ENCODE measurements at regions of chr1 and their contacts with region 1.

Region 1: DNA sequence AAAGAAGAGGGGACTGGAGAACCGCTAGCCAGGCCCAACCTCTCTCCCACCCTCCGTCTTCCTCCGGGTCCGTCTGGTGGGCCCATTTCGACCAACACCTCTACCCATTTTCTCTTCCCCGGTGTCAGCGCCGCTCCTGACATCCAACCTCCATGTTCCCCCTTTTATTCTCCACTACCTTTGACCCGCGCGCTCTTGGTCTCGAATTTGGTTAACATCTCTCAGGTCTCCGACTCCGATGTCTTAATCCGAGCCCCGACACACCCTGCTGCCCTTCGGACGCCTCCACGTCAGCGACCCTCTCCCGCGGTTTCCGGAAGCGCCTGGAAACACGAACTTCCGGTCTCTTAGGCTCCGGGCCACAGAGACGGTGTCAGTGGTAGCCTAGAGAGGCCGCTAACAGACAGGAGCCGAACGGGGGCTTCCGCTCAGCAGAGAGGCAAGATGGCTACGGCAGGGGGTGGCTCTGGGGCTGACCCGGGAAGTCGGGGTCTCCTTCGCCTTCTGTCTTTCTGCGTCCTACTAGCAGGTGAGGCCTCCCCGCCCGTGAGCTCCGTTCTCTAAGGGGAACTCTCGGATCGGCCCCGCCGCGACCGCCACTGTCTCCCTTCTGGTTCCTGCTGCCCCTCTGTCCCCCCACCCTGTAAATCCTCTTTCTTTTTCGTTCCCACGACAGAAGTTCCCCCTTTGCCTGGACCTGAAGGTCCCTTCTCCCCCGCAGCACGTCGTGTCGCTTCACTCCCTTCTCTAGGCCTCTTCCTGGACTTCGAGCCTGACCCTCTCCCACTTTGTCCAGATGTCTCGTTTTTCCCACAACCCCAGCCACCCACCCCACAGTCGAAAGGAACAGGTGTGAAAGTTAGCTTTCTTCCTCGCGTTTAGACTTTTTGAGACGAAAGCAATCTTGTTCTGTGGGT is at the starts of genes COPA and NCSTN:
- DNase-seq: peak; percentile 89 to 97 (median 91)
- ATAC-seq: peak; percentile 97
- H3K4me3 ChIP-seq: peak within 1 kb of the TSS; percentile 74
- H3K27ac ChIP-seq: peak within 1 kb of the TSS; percentile 96
- H3K4me1 ChIP-seq: peaks cover 0 to 14% of the 10 kb centered on the region in 2 experiments; a peak in 2 of 5 replicates
- H3K27me3 ChIP-seq: no peaks in the 10 kb centered on the region
- CTCF ChIP-seq: peak in 1 of 3 experiments; percentile 4; a peak in 1 of 6 replicates
- EP300 ChIP-seq: peak; percentile 35; the same call in 1 of the 2 replicates
- POLR2A ChIP-seq: peak; percentile 95
- RAD21 ChIP-seq: no peak; a peak in 1 of 4 replicates
- polyA plus RNA-seq, gene COPA: 49.8 to 123 TPM
- polyA plus RNA-seq, gene NCSTN: 46.0 to 68.7 TPM

Region 2: DNA sequence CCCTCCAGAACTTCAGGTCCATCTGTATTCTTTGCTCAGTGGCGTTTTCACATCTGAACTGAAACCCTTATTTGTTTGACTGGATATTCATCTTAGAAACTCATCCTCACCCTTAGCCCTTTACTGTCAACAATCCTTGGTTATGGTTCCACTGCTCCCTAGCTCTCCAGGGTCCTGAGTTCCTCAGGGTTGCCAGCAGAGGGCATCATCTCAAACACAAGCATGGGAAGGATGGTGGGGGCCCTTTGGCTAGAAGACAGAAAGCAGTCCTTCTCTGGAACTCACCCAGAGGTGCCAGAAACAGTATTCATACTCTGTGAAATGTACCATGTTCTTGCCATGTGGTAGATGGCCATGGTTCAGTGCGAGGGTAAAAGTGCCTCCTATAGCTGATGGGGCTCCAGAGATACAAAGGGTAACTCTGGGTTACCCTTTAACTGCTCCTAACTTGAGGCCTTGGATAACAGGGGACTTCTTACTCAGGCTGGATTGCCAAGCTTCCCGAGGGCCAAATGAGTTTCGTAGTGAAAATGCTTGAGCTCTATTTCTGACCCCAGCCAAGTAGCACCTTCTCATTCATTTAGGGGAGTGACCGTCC is 11.3 kb after region 1 on chr1:
- CTCF ChIA-PET with region 1: no interaction called
- POLR2A ChIA-PET with region 1: interaction called, 14 read pairs
- in situ Hi-C with region 1: no loop called
- intact Hi-C with region 1: no loop called
- DNase-seq: peak; percentile 58 to 66 (median 60)
- ATAC-seq: peak; percentile 94
- H3K4me3 ChIP-seq: no peak overlapping the region
- H3K27ac ChIP-seq: no peak overlapping the region
- H3K4me1 ChIP-seq: no peaks in the 10 kb centered on the region
- H3K27me3 ChIP-seq: no peaks in the 10 kb centered on the region
- CTCF ChIP-seq: peak; percentile 66 to 71 (median 69)
- EP300 ChIP-seq: no peak
- POLR2A ChIP-seq: no peak
- RAD21 ChIP-seq: peak; percentile 53 to 78; a peak in 3 of 4 replicates

Region 3: DNA sequence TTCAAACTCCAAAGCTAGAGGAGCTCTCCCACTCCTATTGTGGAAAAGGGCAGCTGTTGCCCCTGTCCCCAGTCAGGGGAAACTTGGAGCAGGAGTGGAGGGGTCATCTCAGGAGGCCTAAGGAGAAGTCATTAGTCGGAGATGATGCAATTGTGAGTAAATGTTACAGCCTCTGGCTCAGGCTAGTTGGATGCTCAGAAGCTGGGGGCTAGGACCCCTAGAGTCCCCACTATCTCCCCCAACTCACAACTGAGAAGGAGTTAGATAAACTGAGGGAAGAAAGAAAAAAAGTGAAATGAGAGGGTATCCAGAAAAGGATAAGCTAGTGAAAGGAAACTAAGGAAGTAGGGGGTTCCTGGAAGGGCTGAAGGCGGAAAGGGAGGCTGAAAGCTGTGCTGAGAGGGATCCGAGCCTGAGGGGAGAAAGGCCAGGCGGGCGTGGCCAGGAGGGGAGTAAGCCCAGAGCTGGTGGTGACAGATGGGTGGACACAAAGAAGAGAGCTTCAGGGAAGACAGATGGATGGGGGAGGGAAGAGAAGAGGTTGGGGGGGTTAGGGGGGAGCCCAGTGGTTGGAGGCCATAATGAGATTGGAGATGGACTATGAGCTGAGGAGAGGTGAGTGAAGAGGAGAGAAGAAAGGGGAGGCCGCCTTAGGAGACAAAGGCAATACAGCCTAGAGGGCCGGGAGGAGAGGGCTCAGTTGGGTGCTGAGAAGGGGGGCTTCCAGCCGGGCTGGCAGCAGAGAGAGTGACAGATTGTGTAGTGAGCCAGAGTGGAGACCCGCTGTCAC is 19.2 kb after region 1 on chr1:
- CTCF ChIA-PET with region 1: no interaction called
- POLR2A ChIA-PET with region 1: interaction called, 21 read pairs
- in situ Hi-C with region 1: no loop called
- intact Hi-C with region 1: no loop called
- DNase-seq: peak; percentile 75 to 78 (median 78)
- ATAC-seq: peak; percentile 85
- H3K4me3 ChIP-seq: no peak overlapping the region
- H3K27ac ChIP-seq: peak overlapping the region; percentile 73
- H3K4me1 ChIP-seq: peaks cover 18 to 34% of the 10 kb centered on the region in 2 experiments
- H3K27me3 ChIP-seq: no peaks in the 10 kb centered on the region
- CTCF ChIP-seq: no peak
- EP300 ChIP-seq: peak; percentile 64
- POLR2A ChIP-seq: no peak
- RAD21 ChIP-seq: 0 out of 4 replicates have a peak, but pooled peaks of 1 of the 2 experiments have one; percentile 23

Region 4: DNA sequence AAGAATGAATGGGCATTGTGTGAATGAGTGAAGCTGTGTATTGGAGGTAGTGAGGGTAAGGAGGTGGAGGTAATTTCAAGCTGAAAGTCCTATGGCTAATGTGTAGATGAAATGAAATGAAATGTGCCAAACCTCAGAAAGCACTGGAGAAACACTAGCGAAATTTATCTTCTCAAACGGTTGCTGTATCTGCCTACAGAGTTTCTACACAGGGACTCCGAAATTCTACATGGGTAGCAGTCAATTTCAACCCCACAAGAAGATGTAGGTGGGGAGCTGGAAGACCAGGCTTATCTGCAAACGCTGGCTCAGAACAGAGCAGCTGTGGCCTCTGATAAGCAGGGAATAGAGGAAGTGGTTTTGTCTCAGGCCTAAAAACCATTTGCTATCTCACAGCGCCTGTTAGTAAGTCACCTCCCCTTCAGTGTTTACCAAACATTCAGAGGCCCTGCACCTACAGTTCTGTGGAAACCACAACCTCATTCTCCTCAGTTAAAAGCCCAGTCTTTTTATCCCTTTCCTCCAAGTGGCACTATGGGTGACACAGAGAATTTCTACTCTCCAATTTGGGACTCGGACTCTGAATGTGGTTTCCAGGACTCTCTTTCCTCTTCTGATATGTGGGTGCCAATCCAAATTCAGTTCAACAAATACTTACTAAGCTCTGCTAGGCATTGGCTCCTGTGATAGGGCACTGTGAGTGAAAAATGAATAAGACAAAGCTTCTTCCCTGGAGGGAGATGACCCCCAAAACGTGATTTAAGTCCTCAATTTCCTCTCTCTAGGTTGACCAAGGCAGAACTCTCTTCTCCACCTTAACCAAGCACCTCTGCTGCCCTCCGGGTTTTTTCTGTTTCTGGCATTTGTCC is 197.0 kb after region 1 on chr1:
- CTCF ChIA-PET with region 1: no interaction called
- POLR2A ChIA-PET with region 1: no interaction called
- in situ Hi-C with region 1: no loop called
- intact Hi-C with region 1: no loop called
- DNase-seq: peak; percentile 92 to 99 (median 94)
- ATAC-seq: peak; percentile 95
- H3K4me3 ChIP-seq: no peak overlapping the region; the same call in 1 of the 2 replicates
- H3K27ac ChIP-seq: peak overlapping the region; percentile 93
- H3K4me1 ChIP-seq: peaks cover 22 to 47% of the 10 kb centered on the region in 2 experiments
- H3K27me3 ChIP-seq: no peaks in the 10 kb centered on the region
- CTCF ChIP-seq: peak in 1 of 3 experiments; percentile 32; a peak in 2 of 6 replicates
- EP300 ChIP-seq: peak; percentile 100
- POLR2A ChIP-seq: peak; percentile 72
- RAD21 ChIP-seq: peak; percentile 45 to 61

Region 5: DNA sequence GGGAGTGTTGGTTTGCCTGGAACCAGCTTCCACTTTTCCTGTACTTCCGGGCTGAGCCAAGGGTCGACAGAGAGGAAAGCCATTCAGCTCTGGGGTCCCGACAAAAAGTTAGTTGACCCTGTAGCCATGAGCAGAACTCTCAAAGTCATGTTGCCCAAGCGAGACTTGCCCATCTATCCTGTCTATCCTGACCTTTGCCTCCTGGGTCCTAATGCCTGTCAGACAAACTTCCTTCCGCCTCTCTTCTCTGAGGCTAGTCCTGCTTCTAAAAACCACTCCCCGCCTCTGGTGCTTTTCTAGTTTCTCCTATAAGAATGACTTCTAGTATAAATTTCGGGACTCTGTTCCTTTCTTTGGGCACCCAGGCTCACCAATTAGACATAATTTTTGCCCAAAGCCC is 907.6 kb after region 1 on chr1:
- CTCF ChIA-PET with region 1: no interaction called
- POLR2A ChIA-PET with region 1: no interaction called
- in situ Hi-C with region 1: no loop called
- intact Hi-C with region 1: no loop called
- DNase-seq: no peak
- ATAC-seq: no peak
- H3K4me3 ChIP-seq: no peak overlapping the region
- H3K27ac ChIP-seq: no peak overlapping the region
- H3K4me1 ChIP-seq: no peaks in the 10 kb centered on the region
- H3K27me3 ChIP-seq: no peaks in the 10 kb centered on the region
- CTCF ChIP-seq: no peak
- EP300 ChIP-seq: no peak
- POLR2A ChIP-seq: no peak
- RAD21 ChIP-seq: no peak